ENCODE measurements at regions of chr10 and their contacts with region 1.

Region 1: DNA sequence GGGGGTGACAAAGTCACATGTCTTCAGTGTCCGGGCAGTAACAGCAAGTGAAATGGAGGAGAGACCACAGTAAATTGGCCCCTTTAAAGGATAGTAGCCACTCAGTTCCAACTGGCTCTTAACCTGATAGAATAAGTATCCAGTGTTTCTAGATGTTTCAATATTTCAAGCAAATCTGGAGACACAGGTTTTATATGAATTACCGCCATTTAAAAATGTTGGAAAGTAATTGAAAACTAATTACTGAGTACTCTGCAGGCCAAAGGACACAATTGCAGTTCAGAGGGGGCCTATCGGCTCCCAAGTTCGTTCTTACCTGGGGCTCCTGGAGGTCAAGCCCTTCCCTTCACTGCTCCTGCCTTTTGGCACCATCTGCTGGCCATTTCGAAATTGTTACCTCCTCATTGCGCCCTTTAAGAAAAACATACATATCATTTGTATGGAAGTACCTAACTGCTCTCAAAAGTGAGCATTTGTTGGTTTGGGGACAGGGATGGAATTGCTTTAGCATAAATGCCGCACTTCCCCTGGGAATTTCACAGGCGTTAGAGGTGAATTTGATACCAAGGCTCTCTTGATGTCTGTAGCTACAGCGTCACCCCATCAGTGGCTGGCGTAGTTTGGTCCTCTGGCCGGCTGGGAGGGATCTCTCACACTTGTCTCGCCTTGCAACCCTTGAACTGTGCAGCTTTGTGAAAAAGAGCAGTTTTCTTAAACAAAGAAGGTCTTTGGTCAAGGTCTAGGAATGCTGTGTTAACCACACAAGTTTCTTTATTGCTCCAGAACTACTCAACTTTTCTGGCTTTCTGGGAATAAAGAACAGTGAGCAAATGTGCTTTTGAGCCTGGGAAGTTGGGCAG is 220.0 kb downstream of the ARHGAP21 start:
- DNase-seq: peak; percentile 58
- H3K4me3 Mint-ChIP-seq: no peak overlapping the region
- H3K27ac Mint-ChIP-seq: no peak overlapping the region
- H3K4me1 Mint-ChIP-seq: no peaks in the 10 kb centered on the region
- H3K27me3 Mint-ChIP-seq: peaks cover 14% of the 10 kb centered on the region

Region 2: DNA sequence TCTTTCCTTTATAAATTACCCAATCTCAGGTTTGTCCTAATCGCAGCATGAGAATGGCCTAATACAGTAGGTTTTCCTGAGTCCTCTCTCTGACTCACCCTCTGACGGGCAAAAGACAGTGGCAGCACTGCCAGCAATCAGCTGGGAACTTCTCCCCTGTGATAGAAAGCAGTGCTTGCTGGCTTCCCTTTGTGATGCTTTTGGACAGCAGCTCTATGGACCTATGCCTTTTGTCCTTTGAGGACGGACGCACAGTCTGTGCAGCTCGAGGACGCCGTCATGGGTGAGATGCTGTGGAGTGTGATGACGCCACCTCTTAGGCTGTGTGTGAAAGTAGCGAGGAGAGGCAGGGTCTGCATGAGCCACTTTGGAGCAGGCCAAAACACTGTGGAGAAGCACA is 225.9 kb before region 1 on chr10:
- CTCF ChIA-PET with region 1: no interaction called
- intact Hi-C with region 1: no loop called
- DNase-seq: no peak
- H3K4me3 Mint-ChIP-seq: no peak overlapping the region
- H3K27ac Mint-ChIP-seq: no peak overlapping the region
- H3K4me1 Mint-ChIP-seq: no peaks in the 10 kb centered on the region
- H3K27me3 Mint-ChIP-seq: peaks cover 3% of the 10 kb centered on the region

Region 3: GRCh38 chr10:24360282-24361127 is 143.2 kb before region 1 on chr10:
- CTCF ChIA-PET with region 1: no interaction called
- intact Hi-C with region 1: loop called (anchors 1 kb)
- DNase-seq: peak; percentile 74
- H3K4me3 Mint-ChIP-seq: no peak overlapping the region
- H3K27ac Mint-ChIP-seq: no peak overlapping the region
- H3K4me1 Mint-ChIP-seq: no peaks in the 10 kb centered on the region
- H3K27me3 Mint-ChIP-seq: peaks cover 4% of the 10 kb centered on the region

Measured in activated naive CD4-positive, alpha-beta T cell treated with anti-CD3 and anti-CD28 coated beads for 36 hours (primary cell).